Activated CD4-positive, alpha-beta T cell treated with anti-CD3 and anti-CD28 coated beads, Interleukin-2, amount 10 ng/mL, durations not matched to agents 24 days and 14 days (primary cell): ENCODE measurements at regions of chr5 and their contacts with region 1.

Region 1: DNA sequence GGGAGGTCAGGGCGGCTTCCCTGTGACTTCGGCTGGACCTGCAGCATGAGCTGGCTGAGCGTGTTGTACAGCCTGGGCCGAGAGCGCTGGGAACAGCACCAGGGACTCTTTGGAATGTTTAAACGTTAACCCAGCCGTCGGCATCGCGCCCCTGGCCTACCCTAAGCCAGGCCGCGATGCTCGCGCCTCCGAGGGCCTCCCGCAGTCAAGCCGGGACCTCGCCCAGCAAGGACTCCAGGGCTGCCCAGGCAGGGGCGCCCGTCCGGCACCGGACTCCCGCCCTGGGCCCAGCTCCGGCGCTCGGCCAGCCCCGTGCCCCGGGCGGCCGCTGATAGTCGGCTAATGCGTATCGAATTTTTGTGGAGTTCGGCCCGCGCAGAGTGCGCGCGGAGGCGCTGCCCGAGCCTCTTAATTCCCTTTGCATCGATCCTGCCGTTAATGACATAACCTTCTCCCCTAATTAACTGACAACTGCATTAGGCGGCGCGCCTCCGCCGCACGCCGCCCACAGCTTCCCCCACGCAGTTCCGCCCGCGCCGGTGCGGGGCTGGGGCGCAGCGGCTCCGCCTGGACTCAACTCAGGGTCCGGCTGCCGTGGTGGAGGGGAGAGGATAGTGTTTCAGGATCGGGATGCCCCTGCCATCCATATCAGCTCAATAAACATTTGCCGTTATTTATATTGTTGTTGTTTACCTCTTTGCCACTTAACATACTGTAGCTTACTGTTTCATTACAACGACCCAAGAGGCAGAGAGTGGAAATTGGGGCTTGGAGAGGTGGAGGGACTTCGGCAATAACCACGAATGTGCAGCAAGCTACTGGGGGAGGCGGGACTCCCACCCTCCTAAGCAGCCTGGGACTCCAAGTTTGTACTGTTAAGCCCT is 28.8 kb upstream of the CDC23 start:
- DNase-seq: peak; percentile 63
- H3K4me3 Mint-ChIP-seq: peak overlapping the region; percentile 35
- H3K27ac Mint-ChIP-seq: no peak overlapping the region
- H3K4me1 Mint-ChIP-seq: peaks cover 12% of the 10 kb centered on the region
- H3K27me3 Mint-ChIP-seq: peaks cover 52% of the 10 kb centered on the region

Region 2: DNA sequence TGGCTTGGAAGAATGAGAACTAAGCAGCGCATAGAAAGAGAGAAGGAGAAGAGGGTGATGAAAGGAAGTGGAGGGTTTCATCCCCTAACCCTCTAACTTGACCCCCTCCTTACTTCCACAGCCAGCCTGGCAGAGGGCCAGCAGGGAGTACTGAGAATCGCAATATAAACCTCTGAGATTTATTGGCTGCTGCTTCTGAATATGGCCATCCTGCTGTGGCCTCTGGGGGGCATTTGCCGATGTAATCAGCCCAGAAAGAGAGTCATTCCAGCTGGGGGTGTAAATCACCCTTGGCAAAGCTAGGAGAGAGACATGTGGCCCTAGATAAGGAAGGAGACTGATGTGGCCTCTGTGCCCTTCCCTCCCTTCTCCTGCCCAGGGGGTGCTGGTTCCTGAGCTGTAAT is 33.5 kb after region 1 on chr5:
- intact Hi-C with region 1: loop called (anchors 1 kb)
- DNase-seq: no peak
- H3K4me3 Mint-ChIP-seq: no peak overlapping the region
- H3K27ac Mint-ChIP-seq: no peak overlapping the region
- H3K4me1 Mint-ChIP-seq: peaks cover 4% of the 10 kb centered on the region
- H3K27me3 Mint-ChIP-seq: peaks cover 32% of the 10 kb centered on the region